ENCODE measurements at regions of chr2 and their contacts with region 1.

Region 1: DNA sequence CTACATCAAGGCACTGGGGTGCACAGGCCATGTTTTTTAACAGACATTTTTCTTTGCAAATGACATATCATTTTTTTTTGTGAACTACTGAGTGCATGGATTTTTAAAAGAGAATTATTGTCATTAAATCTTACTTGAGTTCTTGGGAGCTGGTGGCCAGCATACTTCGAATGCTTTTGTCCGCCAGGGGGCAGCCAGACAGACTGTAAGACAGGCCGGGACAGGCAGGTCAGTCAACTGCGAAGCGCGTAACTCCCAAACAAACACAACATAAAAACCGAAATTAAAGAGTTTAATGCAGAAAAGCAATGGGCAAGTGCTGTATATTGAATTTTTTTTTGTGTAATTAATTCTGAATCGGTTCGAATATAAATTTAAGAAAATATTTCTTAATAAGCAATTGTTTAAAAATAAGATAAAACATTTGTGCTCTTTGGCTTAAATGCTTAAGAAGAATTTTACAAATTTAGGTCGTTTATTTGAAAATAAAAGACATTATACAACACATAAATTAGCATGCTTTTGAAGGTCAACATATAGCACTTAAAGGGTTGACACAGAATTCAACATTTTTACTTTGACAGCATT is 142.2 kb upstream of the PXDN start:
- DNase-seq: peak; percentile 83
- H3K4me3 ChIP-seq: peak overlapping the region in 1 of 2 experiments; percentile 19; a peak in 1 of 4 replicates
- H3K27ac ChIP-seq: no peak overlapping the region
- H3K4me1 ChIP-seq: peaks cover 0 to 6% of the 10 kb centered on the region in 2 experiments; a peak in 1 of 4 replicates
- H3K27me3 ChIP-seq: no peaks in the 10 kb centered on the region
- CTCF ChIP-seq: peak; percentile 88
- EP300 ChIP-seq: no peak
- RAD21 ChIP-seq: peak; percentile 73

Region 2: GRCh38 chr2:1854729-1855547 is 31.6 kb before region 1 on chr2:
- CTCF ChIA-PET with region 1: interaction called, 26 read pairs
- POLR2A ChIA-PET with region 1: no interaction called
- DNase-seq: peak; percentile 95
- H3K4me3 ChIP-seq: peak overlapping the region; percentile 46 to 47
- H3K27ac ChIP-seq: peak overlapping the region in 1 of 2 experiments; percentile 55; a peak in 2 of 4 replicates
- H3K4me1 ChIP-seq: peaks cover 3 to 16% of the 10 kb centered on the region in 2 experiments; a peak in 3 of 4 replicates
- H3K27me3 ChIP-seq: peaks cover 30% of the 10 kb centered on the region
- CTCF ChIP-seq: peak; percentile 67
- EP300 ChIP-seq: no peak
- RAD21 ChIP-seq: peak; percentile 95

Region 3: DNA sequence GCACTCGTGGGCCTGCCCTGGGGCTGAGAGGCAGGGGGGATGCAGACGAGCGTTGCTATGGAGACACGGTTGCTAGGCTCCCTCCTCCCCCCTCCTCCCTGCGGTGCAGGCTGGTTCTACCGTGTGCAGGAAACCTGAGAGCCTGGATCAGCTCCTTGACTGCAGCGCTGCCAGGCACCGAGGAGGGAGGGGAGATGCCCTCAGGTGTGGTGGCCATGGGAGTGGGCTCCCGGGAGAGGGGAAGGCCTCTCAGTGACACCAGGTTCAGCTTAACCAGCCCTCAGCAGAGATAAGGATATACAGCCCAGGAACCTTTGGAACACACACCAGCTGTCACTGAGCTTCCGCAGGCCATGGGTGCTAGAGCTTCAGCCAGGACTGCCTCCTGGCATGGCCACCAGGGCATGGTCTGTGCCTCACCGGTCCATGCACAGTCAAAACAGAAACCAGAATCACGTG is 17.8 kb before region 1 on chr2:
- CTCF ChIA-PET with region 1: interaction called, 18 read pairs
- POLR2A ChIA-PET with region 1: no interaction called
- DNase-seq: peak; percentile 85
- H3K4me3 ChIP-seq: no peak overlapping the region
- H3K27ac ChIP-seq: peak overlapping the region in 1 of 2 experiments; percentile 62; a peak in 2 of 4 replicates
- H3K4me1 ChIP-seq: peaks cover 0 to 58% of the 10 kb centered on the region in 2 experiments; a peak in 3 of 4 replicates
- H3K27me3 ChIP-seq: peaks cover 12% of the 10 kb centered on the region
- CTCF ChIP-seq: no peak
- EP300 ChIP-seq: peak in 1 of 2 experiments; percentile 33; a peak in 1 of 4 replicates
- RAD21 ChIP-seq: 0 out of 2 replicates have a peak, but pooled peaks have one; percentile 2

Region 4: GRCh38 chr2:1876352-1876751 is 10.1 kb before region 1 on chr2:
- CTCF ChIA-PET with region 1: interaction called, 11 read pairs
- POLR2A ChIA-PET with region 1: no interaction called
- DNase-seq: no peak
- H3K4me3 ChIP-seq: no peak overlapping the region
- H3K27ac ChIP-seq: no peak overlapping the region
- H3K4me1 ChIP-seq: peaks cover 0 to 12% of the 10 kb centered on the region in 2 experiments; a peak in 2 of 4 replicates
- H3K27me3 ChIP-seq: 0 out of 2 replicates have a peak, but pooled peaks cover 4% of the 10 kb centered on the region
- CTCF ChIP-seq: no peak
- EP300 ChIP-seq: no peak
- RAD21 ChIP-seq: no peak

Region 5: DNA sequence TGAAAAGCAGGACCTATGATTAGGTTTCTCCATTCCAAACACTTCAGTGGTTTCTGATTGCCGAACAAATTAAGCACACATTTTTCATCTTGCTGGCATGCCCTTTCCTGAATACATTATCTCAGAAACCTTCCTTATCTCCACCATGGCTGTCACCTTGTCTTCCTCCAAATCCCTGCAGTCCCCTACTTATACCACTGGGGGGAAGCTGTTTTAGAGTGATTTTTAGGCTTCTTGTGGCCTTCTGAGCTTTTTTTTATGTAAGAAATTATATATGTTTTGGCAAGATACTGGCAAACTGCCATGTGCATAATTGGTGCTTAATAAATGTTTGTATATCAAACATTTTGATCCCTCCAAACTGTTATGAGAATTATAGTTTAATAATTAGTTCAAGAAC is 215.4 kb after region 1 on chr2:
- CTCF ChIA-PET with region 1: interaction called, 10 read pairs
- POLR2A ChIA-PET with region 1: no interaction called
- DNase-seq: peak; percentile 55
- H3K4me3 ChIP-seq: no peak overlapping the region
- H3K27ac ChIP-seq: no peak overlapping the region
- H3K4me1 ChIP-seq: peaks cover 0 to 37% of the 10 kb centered on the region in 2 experiments; a peak in 2 of 4 replicates
- H3K27me3 ChIP-seq: no peaks in the 10 kb centered on the region
- CTCF ChIP-seq: peak; percentile 32
- EP300 ChIP-seq: no peak
- RAD21 ChIP-seq: peak; percentile 26; the same call in 1 of the 2 replicates

Region 6: GRCh38 chr2:2229626-2230432 is 343.3 kb after region 1 on chr2:
- CTCF ChIA-PET with region 1: interaction called, 10 read pairs
- POLR2A ChIA-PET with region 1: no interaction called
- DNase-seq: peak; percentile 44
- H3K4me3 ChIP-seq: no peak overlapping the region
- H3K27ac ChIP-seq: peak overlapping the region in 1 of 2 experiments; percentile 50; a peak in 2 of 4 replicates
- H3K4me1 ChIP-seq: peaks cover 0 to 13% of the 10 kb centered on the region in 2 experiments; a peak in 2 of 4 replicates
- H3K27me3 ChIP-seq: no peaks in the 10 kb centered on the region
- CTCF ChIP-seq: peak; percentile 40
- EP300 ChIP-seq: no peak
- RAD21 ChIP-seq: peak; percentile 74

Region 7: DNA sequence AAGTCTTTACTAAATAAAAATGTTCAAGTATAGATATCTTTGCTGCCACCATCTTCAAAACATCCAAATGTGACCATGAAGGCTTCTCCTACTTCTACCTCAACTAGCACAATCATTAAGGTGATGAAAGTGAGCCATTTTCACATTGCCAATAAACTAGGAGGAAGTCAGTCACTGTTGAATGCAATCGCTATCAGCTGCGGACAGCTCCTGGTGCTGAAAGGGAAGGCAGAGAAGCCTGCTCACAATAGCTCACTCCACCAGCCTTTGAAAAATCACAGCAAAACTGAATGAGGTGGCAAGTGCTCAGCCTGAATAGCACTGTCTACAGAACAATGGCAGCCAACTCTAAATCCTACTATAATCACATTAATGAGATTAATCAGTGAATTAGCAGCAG is 442.3 kb after region 1 on chr2:
- CTCF ChIA-PET with region 1: interaction called, 11 read pairs
- POLR2A ChIA-PET with region 1: no interaction called
- DNase-seq: no peak
- H3K4me3 ChIP-seq: peak overlapping the region in 1 of 2 experiments; percentile 37; a peak in 2 of 4 replicates
- H3K27ac ChIP-seq: peak overlapping the region in 1 of 2 experiments; percentile 100; a peak in 2 of 4 replicates
- H3K4me1 ChIP-seq: peaks cover 0 to 27% of the 10 kb centered on the region in 2 experiments; a peak in 2 of 4 replicates
- H3K27me3 ChIP-seq: no peaks in the 10 kb centered on the region
- CTCF ChIP-seq: no peak
- EP300 ChIP-seq: no peak; a peak in 1 of 4 replicates
- RAD21 ChIP-seq: no peak

Measured in SK-N-SH (cell line).